ENCODE measurements at regions of chr10 and their contacts with region 1.

Region 1: DNA sequence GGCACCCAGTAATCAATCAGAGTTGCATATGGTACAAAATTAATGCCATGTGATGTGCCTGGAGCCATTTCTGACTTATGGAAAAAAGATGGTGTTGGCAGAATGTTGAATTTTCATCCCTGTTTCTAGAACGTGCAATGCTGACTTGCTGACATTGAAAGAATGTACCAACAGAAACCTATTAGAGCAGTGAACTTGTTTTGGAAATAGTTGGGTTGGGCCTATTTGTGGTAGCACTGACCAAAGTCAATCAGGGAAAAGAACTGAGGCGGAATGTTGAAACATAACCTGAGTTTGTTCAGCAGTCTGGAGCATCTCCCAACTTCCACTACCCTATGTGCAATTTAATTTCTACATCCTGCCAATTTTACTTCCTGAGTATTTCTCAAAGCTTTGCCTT is 11.7 kb upstream of the KIAA1217 start:
- DNase-seq: no peak
- H3K4me3 ChIP-seq: no peak overlapping the region
- H3K27ac ChIP-seq: no peak overlapping the region
- H3K4me1 ChIP-seq: no peaks in the 10 kb centered on the region
- H3K27me3 ChIP-seq: no peaks in the 10 kb centered on the region
- CTCF ChIP-seq: no peak
- POLR2A ChIP-seq: no peak

Region 2: GRCh38 chr10:24008164-24009091 is 188.8 kb before region 1 on chr10:
- intact Hi-C with region 1: loop called in 1 of 2 experiments (anchors 5 kb)
- DNase-seq: peak in 1 of 7 donors; percentile 14
- H3K4me3 ChIP-seq: no peak overlapping the region
- H3K27ac ChIP-seq: peak overlapping the region in 1 of 5 donors; percentile 43
- H3K4me1 ChIP-seq: peaks cover 0 to 6% of the 10 kb centered on the region in 2 donors
- H3K27me3 ChIP-seq: no peaks in the 10 kb centered on the region
- CTCF ChIP-seq: no peak
- POLR2A ChIP-seq: no peak

Measured in adrenal gland (tissue), 19 donors.